A549 (cell line): ENCODE measurements at regions of chr15 and their contacts with region 1.

Region 1: GRCh38 chr15:69225355-69226025 is 65.1 kb downstream of the GLCE start:
- DNase-seq: peak; percentile 14 to 55
- ATAC-seq: peak; percentile 50 to 65; a peak in 4 of 6 replicates
- H3K4me3 ChIP-seq: no peak overlapping the region
- H3K27ac ChIP-seq: no peak overlapping the region
- H3K4me1 ChIP-seq: peaks cover 3% of the 10 kb centered on the region; the same call in 1 of the 3 replicates
- CTCF ChIP-seq: peak; percentile 61
- EP300 ChIP-seq: no peak
- POLR2A ChIP-seq: no peak
- RAD21 ChIP-seq: peak; percentile 77 to 79

Region 2: GRCh38 chr15:69067296-69067695 is 158.2 kb before region 1 on chr15:
- CTCF ChIA-PET with region 1: interaction called, 11 read pairs
- POLR2A ChIA-PET with region 1: no interaction called
- DNase-seq: no peak
- ATAC-seq: no peak
- H3K4me3 ChIP-seq: no peak overlapping the region
- H3K27ac ChIP-seq: peak overlapping the region in 1 of 2 experiments; percentile 15; a peak in 1 of 6 replicates
- H3K4me1 ChIP-seq: peaks cover 9% of the 10 kb centered on the region
- CTCF ChIP-seq: no peak
- EP300 ChIP-seq: no peak
- POLR2A ChIP-seq: no peak
- RAD21 ChIP-seq: no peak

Region 3: GRCh38 chr15:69194025-69194827 is 31.3 kb before region 1 on chr15:
- CTCF ChIA-PET with region 1: no interaction called
- POLR2A ChIA-PET with region 1: no interaction called
- DNase-seq: no peak
- ATAC-seq: no peak
- H3K4me3 ChIP-seq: no peak overlapping the region
- H3K27ac ChIP-seq: no peak overlapping the region
- H3K4me1 ChIP-seq: peaks cover 13% of the 10 kb centered on the region; the same call in 2 of the 3 replicates
- CTCF ChIP-seq: no peak
- EP300 ChIP-seq: no peak
- POLR2A ChIP-seq: no peak
- RAD21 ChIP-seq: no peak